ENCODE measurements at regions of chr9 and their contacts with region 1.

Region 1: GRCh38 chr9:124040935-124041816 is 29.6 kb downstream of the LHX2 start:
- DNase-seq: peak; percentile 31
- H3K4me3 Mint-ChIP-seq: no peak overlapping the region
- H3K27ac Mint-ChIP-seq: no peak overlapping the region
- H3K4me1 Mint-ChIP-seq: peaks cover 7% of the 10 kb centered on the region
- H3K27me3 Mint-ChIP-seq: peaks cover 56% of the 10 kb centered on the region

Region 2: GRCh38 chr9:123544007-123544827 is 497.0 kb before region 1 on chr9:
- CTCF ChIA-PET with region 1: interaction called, 16 read pairs
- POLR2A ChIA-PET with region 1: no interaction called
- DNase-seq: peak; percentile 42
- H3K4me3 Mint-ChIP-seq: no peak overlapping the region
- H3K27ac Mint-ChIP-seq: no peak overlapping the region
- H3K4me1 Mint-ChIP-seq: peaks cover 3% of the 10 kb centered on the region
- H3K27me3 Mint-ChIP-seq: no peaks in the 10 kb centered on the region

Region 3: GRCh38 chr9:124054582-124055227 is 13.5 kb after region 1 on chr9:
- CTCF ChIA-PET with region 1: interaction called, 6 read pairs
- POLR2A ChIA-PET with region 1: interaction called, 13 read pairs
- DNase-seq: no peak
- H3K4me3 Mint-ChIP-seq: no peak overlapping the region
- H3K27ac Mint-ChIP-seq: no peak overlapping the region
- H3K4me1 Mint-ChIP-seq: no peaks in the 10 kb centered on the region
- H3K27me3 Mint-ChIP-seq: peaks cover 31% of the 10 kb centered on the region

Measured in activated CD4-positive, alpha-beta T cell treated with anti-CD3 and anti-CD28 coated beads, Interleukin-2, amount 10 ng/mL, durations not matched to agents 7 days and 5 days (primary cell).